Testis (tissue), 5 donors: ENCODE measurements at regions of chr17 and their contacts with region 1.

Region 1: GRCh38 chr17:81094509-81095382 is 59.8 kb downstream of the BAIAP2 start:
- DNase-seq: no peak
- H3K4me3 ChIP-seq: no peak overlapping the region
- H3K27ac ChIP-seq: no peak overlapping the region
- H3K4me1 ChIP-seq: peaks cover 21% of the 10 kb centered on the region
- H3K27me3 ChIP-seq: no peaks in the 10 kb centered on the region
- CTCF ChIP-seq: no peak
- POLR2A ChIP-seq: no peak

Region 2: GRCh38 chr17:79970576-79971068 is 1124.1 kb before region 1 on chr17:
- intact Hi-C with region 1: no loop called
- DNase-seq: peak; percentile 90
- H3K4me3 ChIP-seq: no peak overlapping the region
- H3K27ac ChIP-seq: no peak overlapping the region
- H3K4me1 ChIP-seq: no peaks in the 10 kb centered on the region
- H3K27me3 ChIP-seq: no peaks in the 10 kb centered on the region
- CTCF ChIP-seq: peak; percentile 35 to 56 (median 49)
- POLR2A ChIP-seq: no peak

Region 3: GRCh38 chr17:80981062-80981902 is 113.5 kb before region 1 on chr17:
- intact Hi-C with region 1: loop called (anchors 10 kb)
- DNase-seq: no peak
- H3K4me3 ChIP-seq: peak overlapping the region; percentile 6 to 45
- H3K27ac ChIP-seq: no peak overlapping the region
- H3K4me1 ChIP-seq: peaks cover 12% of the 10 kb centered on the region
- H3K27me3 ChIP-seq: no peaks in the 10 kb centered on the region
- CTCF ChIP-seq: peak; percentile 73 to 89 (median 79)
- POLR2A ChIP-seq: no peak

Region 4: DNA sequence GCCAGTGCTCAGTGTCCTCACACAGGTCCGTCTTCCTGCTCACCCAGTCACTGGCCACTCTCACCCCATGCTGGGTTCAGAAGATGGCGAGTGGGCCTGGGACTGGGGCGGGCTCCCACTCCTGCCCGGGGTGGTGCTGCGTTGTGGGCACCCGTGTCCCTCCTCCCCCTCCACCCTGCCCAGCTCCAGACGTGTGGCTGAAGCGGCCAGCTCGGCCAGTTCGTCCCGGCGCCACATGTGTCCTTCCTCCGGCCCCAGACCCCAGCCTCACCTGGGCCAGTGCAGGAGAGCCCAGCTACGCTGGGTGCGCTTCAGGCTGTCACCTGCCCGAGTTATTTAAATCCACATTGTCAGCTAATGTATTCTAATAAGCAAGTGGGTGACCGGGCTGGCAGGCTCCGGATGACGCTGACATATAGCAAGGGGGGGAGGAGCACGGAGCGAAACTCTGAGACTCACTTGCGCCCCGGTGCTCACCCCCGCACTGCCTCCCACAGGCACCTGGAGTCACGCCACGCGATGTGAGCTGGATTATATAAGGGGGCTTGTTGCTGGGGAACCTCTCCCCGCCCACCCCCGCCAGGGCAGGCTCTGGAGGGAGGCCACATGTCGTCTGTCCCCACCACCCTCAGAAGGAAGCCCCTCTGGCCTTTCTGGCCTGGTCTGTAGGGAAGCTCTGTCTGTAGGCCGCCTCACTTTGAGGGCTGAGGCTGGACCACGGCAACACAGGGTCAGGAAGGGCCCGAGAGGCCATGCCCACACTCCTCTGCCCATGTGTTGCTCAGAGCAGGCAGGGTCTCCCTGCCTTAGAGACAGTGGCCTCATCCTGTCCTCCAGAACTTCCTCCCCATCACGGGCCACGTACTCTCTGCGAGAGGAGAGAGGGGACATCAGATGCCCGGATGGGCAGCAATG is 66.9 kb before region 1 on chr17:
- intact Hi-C with region 1: loop called (anchors 5 kb)
- DNase-seq: no peak
- H3K4me3 ChIP-seq: no peak overlapping the region
- H3K27ac ChIP-seq: no peak overlapping the region
- H3K4me1 ChIP-seq: no peaks in the 10 kb centered on the region
- H3K27me3 ChIP-seq: no peaks in the 10 kb centered on the region
- CTCF ChIP-seq: no peak
- POLR2A ChIP-seq: no peak